GM12878 (cell line): ENCODE measurements at regions of chr11 and their contacts with region 1.

Region 1: GRCh38 chr11:36492724-36493304 is 17.3 kb downstream of the TRAF6 start:
- DNase-seq: no peak
- ATAC-seq: peak; percentile 86
- H3K4me3 ChIP-seq: no peak overlapping the region
- H3K27ac ChIP-seq: no peak overlapping the region
- H3K4me1 ChIP-seq: peaks cover 6% of the 10 kb centered on the region; the same call in 1 of the 2 replicates
- H3K27me3 ChIP-seq: no peaks in the 10 kb centered on the region
- CTCF ChIP-seq: peak; percentile 67 to 79 (median 70)
- EP300 ChIP-seq: no peak
- POLR2A ChIP-seq: no peak
- RAD21 ChIP-seq: peak; percentile 88

Region 2: GRCh38 chr11:36265793-36266628 is 226.8 kb before region 1 on chr11:
- CTCF ChIA-PET with region 1: interaction called, 10 read pairs
- POLR2A ChIA-PET with region 1: no interaction called
- RAD21 ChIA-PET with region 1: interaction called, 3 read pairs
- SMC1A ChIA-PET with region 1: interaction called, 3 read pairs
- in situ Hi-C with region 1: no loop called
- intact Hi-C with region 1: no loop called
- DNase-seq: no peak
- ATAC-seq: peak; percentile 95
- H3K4me3 ChIP-seq: no peak overlapping the region
- H3K27ac ChIP-seq: no peak overlapping the region
- H3K4me1 ChIP-seq: no peaks in the 10 kb centered on the region
- H3K27me3 ChIP-seq: no peaks in the 10 kb centered on the region
- CTCF ChIP-seq: peak; percentile 89 to 93 (median 92)
- EP300 ChIP-seq: no peak
- POLR2A ChIP-seq: no peak
- RAD21 ChIP-seq: peak; percentile 91

Region 3: DNA sequence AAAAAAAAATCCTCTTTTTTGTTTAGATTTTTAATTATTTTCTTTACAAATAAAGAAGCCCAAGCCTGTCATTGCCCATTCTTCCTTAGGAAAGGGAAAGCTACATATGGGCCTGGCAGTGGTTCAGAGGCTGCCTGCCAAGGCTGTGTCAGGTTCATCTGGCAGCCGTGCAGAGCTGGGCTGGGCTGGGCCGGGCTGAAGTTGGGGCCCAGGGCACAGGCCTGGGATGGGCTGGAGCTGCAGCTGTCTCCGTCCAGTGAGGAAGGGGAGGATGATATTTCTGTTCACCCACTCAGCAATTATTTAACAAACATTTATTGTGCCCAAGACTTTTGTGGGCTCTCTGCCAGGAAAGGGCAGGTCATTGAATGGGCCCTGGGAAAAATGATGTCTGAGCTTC is 192.2 kb before region 1 on chr11:
- CTCF ChIA-PET with region 1: interaction called, 176 read pairs
- POLR2A ChIA-PET with region 1: no interaction called
- RAD21 ChIA-PET with region 1: interaction called, 102 read pairs
- SMC1A ChIA-PET with region 1: interaction called, 12 read pairs
- in situ Hi-C with region 1: no loop called
- intact Hi-C with region 1: no loop called
- DNase-seq: no peak
- ATAC-seq: no peak
- H3K4me3 ChIP-seq: no peak overlapping the region
- H3K27ac ChIP-seq: no peak overlapping the region
- H3K4me1 ChIP-seq: no peaks in the 10 kb centered on the region
- H3K27me3 ChIP-seq: peaks cover 1 to 6% of the 10 kb centered on the region in 2 experiments; a peak in 2 of 4 replicates
- CTCF ChIP-seq: no peak
- EP300 ChIP-seq: no peak
- POLR2A ChIP-seq: no peak
- RAD21 ChIP-seq: no peak

Region 4: GRCh38 chr11:36312611-36313472 is 180.0 kb before region 1 on chr11:
- CTCF ChIA-PET with region 1: interaction called, 25 read pairs
- POLR2A ChIA-PET with region 1: no interaction called
- RAD21 ChIA-PET with region 1: interaction called, 11 read pairs
- SMC1A ChIA-PET with region 1: interaction called, 22 read pairs
- in situ Hi-C with region 1: no loop called
- intact Hi-C with region 1: no loop called
- DNase-seq: no peak
- ATAC-seq: peak; percentile 64
- H3K4me3 ChIP-seq: no peak overlapping the region
- H3K27ac ChIP-seq: no peak overlapping the region
- H3K4me1 ChIP-seq: no peaks in the 10 kb centered on the region
- H3K27me3 ChIP-seq: peaks cover 0 to 2% of the 10 kb centered on the region in 2 experiments; a peak in 1 of 4 replicates
- CTCF ChIP-seq: no peak
- EP300 ChIP-seq: peak in 1 of 2 experiments; percentile 65; a peak in 2 of 4 replicates
- POLR2A ChIP-seq: no peak
- RAD21 ChIP-seq: no peak

Region 5: DNA sequence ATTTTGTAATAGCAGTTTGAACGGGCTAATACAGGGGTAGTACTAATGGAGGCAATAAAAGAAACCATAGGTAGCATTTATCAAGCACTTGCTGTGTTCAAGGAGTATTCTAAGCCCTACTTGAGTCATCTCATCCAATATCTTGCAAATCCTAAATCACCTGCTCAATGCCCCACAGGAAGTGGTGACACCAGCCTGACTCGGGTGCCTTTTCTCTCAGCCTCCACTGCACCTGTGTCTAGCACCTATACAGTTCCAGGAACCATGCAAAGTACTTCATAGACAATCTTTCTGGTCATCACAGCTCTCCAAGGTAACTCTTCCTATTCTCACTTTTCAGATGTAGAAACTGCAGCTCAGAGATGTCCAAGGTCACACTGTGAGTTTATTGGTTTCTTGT is 98.8 kb before region 1 on chr11:
- CTCF ChIA-PET with region 1: no interaction called
- POLR2A ChIA-PET with region 1: no interaction called
- RAD21 ChIA-PET with region 1: no interaction called
- SMC1A ChIA-PET with region 1: no interaction called
- in situ Hi-C with region 1: no loop called
- intact Hi-C with region 1: no loop called
- DNase-seq: no peak
- ATAC-seq: no peak
- H3K4me3 ChIP-seq: no peak overlapping the region
- H3K27ac ChIP-seq: no peak overlapping the region
- H3K4me1 ChIP-seq: peaks cover 4% of the 10 kb centered on the region; the same call in 1 of the 2 replicates
- H3K27me3 ChIP-seq: no peaks in the 10 kb centered on the region
- CTCF ChIP-seq: no peak
- EP300 ChIP-seq: no peak
- POLR2A ChIP-seq: no peak
- RAD21 ChIP-seq: no peak

Region 6: GRCh38 chr11:36509694-36510566 is 17.1 kb after region 1 on chr11 and contains the start of gene TRAF6:
- CTCF ChIA-PET with region 1: interaction called, 40 read pairs
- POLR2A ChIA-PET with region 1: interaction called, 5 read pairs
- RAD21 ChIA-PET with region 1: interaction called, 18 read pairs
- SMC1A ChIA-PET with region 1: interaction called, 20 read pairs
- in situ Hi-C with region 1: no loop called
- intact Hi-C with region 1: no loop called
- DNase-seq: no peak
- ATAC-seq: peak; percentile 98
- H3K4me3 ChIP-seq: peak within 1 kb of the TSS; percentile 86
- H3K27ac ChIP-seq: peak within 1 kb of the TSS; percentile 77
- H3K4me1 ChIP-seq: peaks cover 4% of the 10 kb centered on the region; the same call in 1 of the 2 replicates
- H3K27me3 ChIP-seq: no peaks in the 10 kb centered on the region
- CTCF ChIP-seq: peak; percentile 78 to 86 (median 86)
- EP300 ChIP-seq: no peak
- POLR2A ChIP-seq: peak; percentile 100
- RAD21 ChIP-seq: no peak
- polyA plus RNA-seq, gene TRAF6: 1.4 to 2.6 TPM

Region 7: DNA sequence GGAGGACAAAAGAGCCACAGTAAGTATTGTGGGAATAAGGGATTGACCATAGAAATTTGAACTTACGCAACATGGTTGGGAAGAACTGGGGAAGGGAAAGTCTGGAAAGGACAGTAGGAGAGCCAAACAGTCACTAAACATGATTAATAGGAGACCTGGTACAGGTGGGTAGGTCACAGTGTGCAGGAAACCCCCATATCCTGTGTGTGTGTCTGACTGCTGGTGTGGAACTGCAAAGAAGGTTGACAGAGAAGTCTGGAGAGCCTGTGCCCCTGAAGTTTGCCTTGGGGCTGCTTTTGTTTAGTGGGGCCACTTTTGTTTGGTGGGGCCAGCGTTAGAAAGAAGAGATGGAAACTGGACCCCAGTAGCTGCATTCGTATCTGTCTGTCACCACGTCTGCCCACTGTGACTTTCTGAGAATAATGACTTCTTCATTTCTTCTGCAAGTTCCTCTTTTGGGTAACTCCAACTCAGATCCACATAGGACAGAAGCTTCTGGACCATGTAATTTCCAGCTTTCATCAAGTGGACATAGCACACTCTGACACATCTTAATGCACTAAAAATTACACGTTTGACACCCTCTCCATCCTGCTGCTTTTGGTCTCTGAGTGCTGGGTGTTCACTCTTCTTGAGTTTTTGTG is 232.1 kb after region 1 on chr11:
- CTCF ChIA-PET with region 1: no interaction called
- POLR2A ChIA-PET with region 1: no interaction called
- RAD21 ChIA-PET with region 1: no interaction called
- SMC1A ChIA-PET with region 1: no interaction called
- in situ Hi-C with region 1: no loop called
- intact Hi-C with region 1: no loop called
- DNase-seq: peak; percentile 23
- ATAC-seq: peak; percentile 88
- H3K4me3 ChIP-seq: no peak overlapping the region
- H3K27ac ChIP-seq: no peak overlapping the region
- H3K4me1 ChIP-seq: peaks cover 9% of the 10 kb centered on the region; the same call in 1 of the 2 replicates
- H3K27me3 ChIP-seq: no peaks in the 10 kb centered on the region
- CTCF ChIP-seq: no peak
- EP300 ChIP-seq: no peak
- POLR2A ChIP-seq: no peak
- RAD21 ChIP-seq: no peak